Activated naive CD4-positive, alpha-beta T cell treated with anti-CD3 and anti-CD28 coated beads for 36 hours (primary cell): ENCODE measurements at regions of chr16 and their contacts with region 1.

Region 1: GRCh38 chr16:30922960-30923535 is 324 bp upstream of the FBXL19 start:
- DNase-seq: peak; percentile 99
- H3K4me3 Mint-ChIP-seq: peak overlapping the region; percentile 99
- H3K27ac Mint-ChIP-seq: peak overlapping the region; percentile 100
- H3K4me1 Mint-ChIP-seq: peaks cover 14% of the 10 kb centered on the region
- H3K27me3 Mint-ChIP-seq: no peaks in the 10 kb centered on the region

Region 2: DNA sequence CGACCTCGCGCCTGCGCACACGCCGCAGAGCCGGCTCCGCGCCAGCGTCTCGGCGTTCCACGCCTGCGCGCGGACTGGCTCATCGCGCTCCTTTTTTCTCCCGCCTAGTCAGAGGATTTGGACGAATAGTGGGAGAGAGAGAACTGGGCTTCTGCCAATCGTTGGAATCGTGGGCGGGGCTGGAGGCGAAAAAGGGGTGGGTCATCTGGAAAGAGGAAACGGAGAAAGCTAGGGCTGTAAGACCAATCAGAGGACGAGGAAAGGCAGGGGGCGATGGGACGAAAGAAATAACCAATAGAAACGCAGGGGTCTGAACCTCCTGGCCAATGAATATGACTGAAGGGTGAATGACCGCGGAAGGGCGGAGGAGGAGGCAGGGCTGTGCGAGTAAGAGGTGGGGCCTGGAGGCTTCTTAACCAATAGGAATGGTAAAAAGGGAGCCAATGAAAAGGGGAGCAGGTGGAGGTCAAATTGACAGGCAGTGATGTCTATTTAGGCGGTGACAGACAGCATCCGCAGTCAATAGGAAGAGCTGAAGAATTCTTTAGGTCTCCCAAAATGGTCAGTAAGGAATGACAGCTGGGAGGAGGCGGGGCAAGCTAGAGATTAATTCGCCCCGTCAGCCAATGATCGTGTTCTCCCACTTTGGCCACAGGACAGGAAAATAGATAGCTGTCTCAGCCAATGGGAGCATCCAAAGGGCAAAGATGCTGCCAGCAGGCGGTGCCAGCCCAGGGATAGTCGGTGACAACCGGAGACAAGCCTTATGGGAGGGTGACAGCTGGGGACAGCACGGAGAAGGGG is 552.4 kb before region 1 on chr16 and contains the start of gene TBC1D10B:
- CTCF ChIA-PET with region 1: no interaction called
- intact Hi-C with region 1: loop called (anchors 10 kb)
- DNase-seq: peak; percentile 100
- H3K4me3 Mint-ChIP-seq: peak within 1 kb of the TSS; percentile 94
- H3K27ac Mint-ChIP-seq: peak within 1 kb of the TSS; percentile 98
- H3K4me1 Mint-ChIP-seq: peaks cover 40% of the 10 kb centered on the region
- H3K27me3 Mint-ChIP-seq: no peaks in the 10 kb centered on the region
- total RNA-seq, gene TBC1D10B: 36.6 to 38.4 TPM

Region 3: GRCh38 chr16:30747799-30748634 is 175.0 kb before region 1 on chr16 and contains the start of gene PHKG2:
- CTCF ChIA-PET with region 1: no interaction called
- intact Hi-C with region 1: loop called (anchors 1 kb)
- DNase-seq: peak; percentile 99
- H3K4me3 Mint-ChIP-seq: peak within 1 kb of the TSS; percentile 89
- H3K27ac Mint-ChIP-seq: peak within 1 kb of the TSS; percentile 86
- H3K4me1 Mint-ChIP-seq: peaks cover 19% of the 10 kb centered on the region
- H3K27me3 Mint-ChIP-seq: no peaks in the 10 kb centered on the region
- total RNA-seq, gene PHKG2: 23.3 to 26.4 TPM

Region 4: DNA sequence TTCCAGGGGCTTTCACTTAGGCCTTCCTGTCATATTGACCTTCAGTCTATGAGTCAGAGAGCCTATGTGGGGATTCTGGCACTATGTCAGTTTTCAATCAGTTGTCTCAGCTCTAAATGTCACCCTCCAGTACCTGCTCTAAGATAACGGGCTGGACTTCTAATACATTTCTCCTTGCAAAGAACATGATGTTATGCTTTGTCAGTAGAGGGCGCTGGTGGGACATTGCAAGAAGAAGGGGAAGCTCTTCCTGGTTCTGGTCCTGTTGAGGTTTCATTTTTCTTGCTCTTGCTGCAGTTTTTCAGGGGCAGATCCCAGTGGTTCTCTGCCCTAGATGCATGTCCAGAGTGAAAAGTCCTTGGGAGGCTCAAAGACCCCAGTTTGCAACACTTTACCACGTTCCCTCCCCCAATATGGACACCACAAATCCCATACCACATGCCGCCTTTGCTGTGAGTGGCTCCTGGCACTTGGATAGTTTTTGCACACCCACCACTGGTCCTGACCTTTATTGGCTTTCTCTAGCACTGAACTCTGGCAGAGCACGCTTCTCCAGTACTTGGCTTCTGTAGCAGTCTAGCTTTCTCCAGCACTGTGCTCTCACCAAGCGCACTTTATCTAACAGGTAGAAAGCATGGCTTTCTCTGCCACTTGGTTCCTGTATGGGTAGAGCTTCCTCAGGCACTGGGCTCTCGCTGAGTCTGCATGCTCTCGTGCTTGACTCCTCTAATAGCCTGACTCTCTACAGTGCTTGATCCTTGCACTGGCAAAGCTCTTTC is 78.2 kb before region 1 on chr16:
- CTCF ChIA-PET with region 1: interaction called, 38 read pairs
- intact Hi-C with region 1: loop called (anchors 1 kb)
- DNase-seq: peak; percentile 93
- H3K4me3 Mint-ChIP-seq: no peak overlapping the region
- H3K27ac Mint-ChIP-seq: no peak overlapping the region
- H3K4me1 Mint-ChIP-seq: peaks cover 8% of the 10 kb centered on the region
- H3K27me3 Mint-ChIP-seq: no peaks in the 10 kb centered on the region

Region 5: GRCh38 chr16:30882429-30883310 is 40.4 kb before region 1 on chr16:
- CTCF ChIA-PET with region 1: no interaction called
- intact Hi-C with region 1: no loop called
- DNase-seq: no peak
- H3K4me3 Mint-ChIP-seq: no peak overlapping the region
- H3K27ac Mint-ChIP-seq: peak overlapping the region; percentile 32
- H3K4me1 Mint-ChIP-seq: peaks cover 27% of the 10 kb centered on the region
- H3K27me3 Mint-ChIP-seq: no peaks in the 10 kb centered on the region

Region 6: DNA sequence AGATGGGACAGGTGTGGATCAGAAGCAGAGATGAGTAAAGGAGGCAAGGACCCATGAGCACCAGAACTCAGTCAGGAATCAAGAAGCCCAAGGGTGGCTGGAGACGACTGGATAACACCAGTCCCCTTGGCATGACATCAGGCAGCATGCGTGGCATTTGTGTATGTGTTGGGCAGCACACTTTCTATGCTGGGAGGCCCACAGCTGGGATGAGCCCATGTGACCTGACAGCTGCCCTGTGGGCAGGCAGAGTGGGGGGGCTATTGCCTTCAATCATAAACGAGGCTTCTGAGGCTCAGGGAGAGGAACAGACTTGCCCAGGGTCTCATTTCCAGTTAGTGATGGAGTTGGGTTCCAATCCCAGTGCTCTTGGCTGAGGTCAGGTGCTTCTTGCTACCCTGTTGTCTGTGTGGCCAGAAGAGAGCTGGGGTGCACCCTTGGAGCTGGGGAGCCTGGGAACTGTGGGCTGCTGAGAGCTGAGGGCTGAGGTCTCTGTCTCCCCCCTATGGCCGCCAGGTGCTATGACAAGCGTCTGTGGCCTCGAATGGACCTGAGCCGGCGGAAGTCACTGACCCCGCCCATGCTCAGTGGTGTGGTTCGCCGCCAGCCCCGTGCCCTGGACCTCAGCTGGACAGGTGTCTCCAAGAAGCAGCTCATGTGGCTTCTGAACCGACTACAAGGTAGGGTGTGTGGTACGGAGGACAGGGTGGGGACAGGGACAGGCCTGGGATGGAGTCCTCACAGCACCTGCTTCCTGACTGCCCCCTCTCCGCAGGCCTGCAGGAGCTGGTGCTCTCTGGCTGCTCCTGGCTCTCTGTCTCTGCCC is 18.8 kb after region 1 on chr16:
- CTCF ChIA-PET with region 1: interaction called, 19 read pairs
- intact Hi-C with region 1: no loop called
- DNase-seq: peak; percentile 79
- H3K4me3 Mint-ChIP-seq: no peak overlapping the region
- H3K27ac Mint-ChIP-seq: peak overlapping the region; percentile 51
- H3K4me1 Mint-ChIP-seq: peaks cover 21% of the 10 kb centered on the region
- H3K27me3 Mint-ChIP-seq: no peaks in the 10 kb centered on the region

Region 7: DNA sequence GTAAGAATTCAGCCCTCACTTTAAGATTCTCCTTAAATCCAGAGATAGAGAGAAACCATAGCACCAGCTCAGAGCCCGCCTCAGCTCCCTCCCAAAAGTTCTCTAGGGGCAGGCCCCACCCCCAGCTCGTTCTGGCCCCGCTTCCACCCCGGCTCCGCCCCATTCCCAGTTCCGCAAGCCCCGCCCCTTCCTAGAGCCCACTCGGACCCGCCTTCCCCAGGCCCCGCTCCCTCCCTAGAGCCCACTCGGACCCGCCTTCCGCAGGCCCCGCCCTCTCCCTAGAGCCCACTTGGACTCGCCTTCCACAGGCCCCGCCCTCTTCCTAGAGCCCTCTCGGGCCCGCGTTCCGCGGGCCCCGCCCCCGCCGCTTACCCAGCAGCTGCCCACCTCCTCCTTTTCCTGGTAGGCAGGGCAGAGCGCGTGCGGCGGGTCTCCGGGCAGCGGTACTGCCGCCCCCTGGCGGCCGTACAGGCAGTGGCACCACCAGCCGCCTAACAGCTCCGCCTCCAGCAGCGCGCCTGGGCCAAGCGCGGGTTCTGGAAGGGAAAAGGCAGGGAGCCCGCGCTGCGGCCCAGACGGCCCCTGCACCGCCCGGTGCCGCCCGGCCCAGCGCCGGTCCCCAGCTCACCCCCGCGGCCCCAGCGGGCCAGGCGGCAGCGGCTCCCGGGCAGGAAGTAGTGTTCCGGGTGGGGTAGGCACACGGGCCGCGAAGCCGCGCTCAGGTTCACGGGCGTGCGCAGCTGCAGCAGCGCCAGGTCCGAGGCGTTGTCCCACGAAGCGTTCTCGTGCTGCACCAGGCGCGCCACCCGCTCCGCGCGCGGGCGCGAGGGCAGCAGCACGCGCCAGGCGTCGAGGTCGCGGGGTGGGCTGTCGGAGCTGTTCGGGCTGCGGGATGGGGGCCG is 219.3 kb after region 1 on chr16:
- CTCF ChIA-PET with region 1: no interaction called
- intact Hi-C with region 1: loop called (anchors 1 kb)
- DNase-seq: peak; percentile 99
- H3K4me3 Mint-ChIP-seq: peak overlapping the region; percentile 64
- H3K27ac Mint-ChIP-seq: peak overlapping the region; percentile 84
- H3K4me1 Mint-ChIP-seq: peaks cover 12% of the 10 kb centered on the region
- H3K27me3 Mint-ChIP-seq: no peaks in the 10 kb centered on the region

Region 8: DNA sequence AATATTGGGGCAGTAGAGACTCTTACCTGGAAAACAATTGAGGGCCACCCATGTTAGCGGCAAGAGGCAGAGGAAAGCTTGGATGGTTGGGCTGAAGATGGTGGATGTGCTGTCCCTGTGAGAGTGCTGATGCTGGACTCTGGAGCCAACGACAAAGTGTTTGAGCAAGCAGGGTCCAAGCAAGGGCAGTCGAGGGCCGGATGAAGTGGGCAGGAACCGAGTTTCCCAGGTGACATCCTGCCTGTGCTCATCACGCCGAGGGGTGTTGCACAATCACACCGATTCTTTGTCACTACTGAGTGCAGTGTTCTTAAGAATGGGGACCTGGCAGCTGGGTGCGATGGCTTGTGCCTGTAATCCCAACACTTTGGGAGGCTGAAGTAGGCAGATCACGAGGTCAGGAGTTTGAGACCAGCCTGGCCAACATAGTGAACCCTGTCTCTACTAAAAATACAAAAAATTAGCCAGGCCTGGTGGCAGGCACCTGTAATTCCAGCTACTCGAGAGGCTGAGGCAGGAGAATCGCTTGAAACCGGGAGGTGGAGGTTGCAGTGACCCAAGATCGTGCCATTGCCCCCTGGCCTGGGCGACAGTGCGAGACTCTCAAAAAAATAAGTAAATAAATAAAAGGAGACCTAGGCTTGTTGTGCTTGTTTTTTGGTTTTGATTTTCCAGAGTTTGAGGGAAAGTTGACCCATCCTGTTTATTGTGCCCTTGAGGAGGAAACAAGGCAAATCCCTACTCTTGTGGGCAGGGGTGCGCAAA is 273.5 kb after region 1 on chr16:
- CTCF ChIA-PET with region 1: no interaction called
- intact Hi-C with region 1: no loop called
- DNase-seq: no peak
- H3K4me3 Mint-ChIP-seq: no peak overlapping the region
- H3K27ac Mint-ChIP-seq: peak overlapping the region; percentile 65
- H3K4me1 Mint-ChIP-seq: peaks cover 47% of the 10 kb centered on the region
- H3K27me3 Mint-ChIP-seq: no peaks in the 10 kb centered on the region